Psoas muscle (tissue), 8 donors: ENCODE measurements at regions of chr2 and their contacts with region 1.

Region 1: GRCh38 chr2:21118302-21118920 is 5.4 kb upstream of the TDRD15 start:
- DNase-seq: no peak
- ATAC-seq: peak in 3 of 4 donors; percentile 59 to 81 (median 64)
- H3K4me3 ChIP-seq: no peak overlapping the region
- H3K27ac ChIP-seq: no peak overlapping the region
- H3K4me1 ChIP-seq: no peaks in the 10 kb centered on the region
- H3K27me3 ChIP-seq: no peaks in the 10 kb centered on the region
- CTCF ChIP-seq: peak; percentile 59

Region 2: DNA sequence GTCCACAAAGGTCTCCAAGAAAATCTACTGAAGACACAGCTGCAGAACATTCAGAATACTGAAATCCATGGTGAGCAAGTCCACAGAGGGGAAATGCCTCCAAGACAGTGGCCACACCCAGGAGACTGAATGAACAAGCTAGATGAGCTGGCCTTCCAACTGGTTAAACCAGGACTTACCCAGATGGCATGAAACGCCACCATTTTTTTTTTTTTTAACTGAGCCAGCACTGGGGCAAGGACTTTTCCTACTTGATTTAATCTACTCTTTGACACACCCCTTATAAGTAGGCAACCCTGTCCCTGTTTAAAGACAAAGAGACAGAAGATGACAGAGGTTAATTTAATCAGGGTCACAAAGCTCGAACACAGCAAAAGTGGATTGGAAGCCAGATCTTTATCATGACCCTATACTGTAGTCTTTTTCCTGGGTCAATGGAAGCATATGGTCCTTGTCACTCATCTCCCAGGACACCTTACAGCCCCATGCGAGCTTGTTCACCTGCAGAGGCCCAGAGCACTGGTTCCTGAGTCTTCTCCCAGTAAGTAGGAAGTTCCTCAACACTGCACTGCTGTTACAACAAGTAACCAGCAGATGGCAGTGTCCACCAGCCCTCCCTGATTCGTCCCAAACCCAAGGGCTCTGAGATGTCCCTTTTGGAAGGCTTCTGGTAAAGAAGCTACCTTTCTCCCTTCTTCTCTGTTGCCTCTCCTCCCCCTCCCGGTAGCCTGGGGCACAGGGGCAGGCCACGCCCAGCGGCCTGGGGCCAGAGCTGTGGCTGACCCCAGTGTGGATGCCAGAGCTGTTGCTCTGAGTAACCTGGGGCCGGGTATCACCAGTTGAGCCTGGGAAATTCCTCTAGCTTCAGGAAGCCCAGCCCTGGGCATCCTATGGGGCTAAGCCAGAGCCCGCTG is 457.1 kb before region 1 on chr2:
- intact Hi-C with region 1: loop called (anchors 2 to 5 kb)
- DNase-seq: peak; percentile 65 to 76
- ATAC-seq: peak; percentile 77 to 90 (median 84)
- H3K4me3 ChIP-seq: no peak overlapping the region
- H3K27ac ChIP-seq: no peak overlapping the region
- H3K4me1 ChIP-seq: peaks cover 4% of the 10 kb centered on the region
- H3K27me3 ChIP-seq: peaks cover 0 to 48% (median 25%) of the 10 kb centered on the region in 3 donors
- CTCF ChIP-seq: peak; percentile 98

Region 3: GRCh38 chr2:20675701-20676352 is 442.6 kb before region 1 on chr2:
- intact Hi-C with region 1: loop called in 1 of 2 experiments (anchors 5 kb)
- DNase-seq: no peak
- ATAC-seq: peak in 1 of 4 donors; percentile 8
- H3K4me3 ChIP-seq: no peak overlapping the region
- H3K27ac ChIP-seq: no peak overlapping the region
- H3K4me1 ChIP-seq: no peaks in the 10 kb centered on the region
- H3K27me3 ChIP-seq: peaks cover 0 to 37% (median 14%) of the 10 kb centered on the region in 3 donors
- CTCF ChIP-seq: no peak

Region 4: DNA sequence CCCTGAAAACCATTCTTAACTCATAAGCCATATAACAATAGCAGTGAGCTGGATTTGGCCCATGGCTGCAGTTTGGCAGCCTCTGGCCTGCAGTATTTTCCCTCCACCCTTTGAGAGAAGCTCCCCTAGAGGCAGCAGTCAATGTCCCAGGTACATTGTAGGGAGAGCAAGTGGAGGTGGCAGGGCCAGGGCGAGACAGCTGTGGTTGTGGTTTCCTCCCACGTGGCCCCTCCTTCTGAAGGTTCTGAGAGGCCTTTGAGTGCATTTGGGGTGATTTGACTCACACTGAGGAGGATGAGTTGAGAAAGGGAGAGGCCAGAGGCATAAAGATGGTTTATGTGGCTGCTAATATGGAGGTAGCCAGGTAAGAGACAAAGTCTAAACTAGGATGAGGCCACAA is 250.0 kb before region 1 on chr2:
- intact Hi-C with region 1: no loop called
- DNase-seq: no peak
- ATAC-seq: no peak
- H3K4me3 ChIP-seq: no peak overlapping the region
- H3K27ac ChIP-seq: no peak overlapping the region
- H3K4me1 ChIP-seq: no peaks in the 10 kb centered on the region
- H3K27me3 ChIP-seq: peaks cover 0 to 3% (median 0%) of the 10 kb centered on the region in 3 donors
- CTCF ChIP-seq: no peak